ENCODE measurements at regions of chr14 and their contacts with region 1.

Region 1: DNA sequence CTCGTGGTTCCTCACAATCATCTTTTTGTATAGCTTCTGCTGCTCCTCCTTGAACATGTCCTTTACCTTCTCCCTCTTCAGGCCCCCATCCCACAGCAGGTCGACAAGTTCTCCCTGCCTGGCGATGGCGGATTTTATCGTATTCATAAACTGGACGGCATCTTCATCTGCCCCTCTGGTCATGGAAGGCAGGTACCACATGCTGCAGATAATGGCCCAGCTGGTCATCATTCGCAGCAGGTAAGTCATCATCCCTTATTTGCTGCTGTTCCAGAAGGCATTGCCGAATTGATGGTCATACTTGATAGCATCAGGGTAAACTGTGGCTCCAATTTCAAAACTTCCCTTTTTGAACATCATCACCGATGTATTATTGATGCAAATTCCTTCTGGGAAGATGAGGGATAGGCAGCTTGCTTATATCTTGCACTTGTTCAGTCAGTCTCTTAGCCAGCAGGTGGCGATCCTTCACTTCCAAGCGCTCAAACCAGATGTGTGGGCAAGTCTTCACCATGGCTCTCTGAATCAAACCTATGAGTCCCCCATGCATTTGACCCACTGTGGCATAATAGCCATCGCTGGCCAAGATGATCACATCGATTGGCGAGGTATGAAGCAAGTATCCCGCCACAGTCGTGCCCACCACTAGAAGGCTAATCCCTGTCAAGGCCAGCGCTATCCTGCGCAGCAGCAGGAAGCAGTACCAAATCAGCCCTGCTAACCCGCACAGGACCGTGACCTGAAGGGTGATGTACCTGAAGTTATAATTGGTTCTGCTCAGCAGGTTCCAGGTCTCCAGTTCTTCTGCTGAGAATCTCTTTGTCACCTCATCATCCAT is 381.5 kb upstream of the STXBP6 start:
- DNase-seq: peak; percentile 53
- ATAC-seq: peak; percentile 97
- H3K4me3 ChIP-seq: no peak overlapping the region
- H3K27ac ChIP-seq: no peak overlapping the region
- H3K4me1 ChIP-seq: no peaks in the 10 kb centered on the region
- H3K27me3 ChIP-seq: no peaks in the 10 kb centered on the region
- CTCF ChIP-seq: peak; percentile 75
- EP300 ChIP-seq: no peak
- POLR2A ChIP-seq: no peak
- RAD21 ChIP-seq: no peak

Region 2: GRCh38 chr14:24232121-24232644 is 1199.2 kb before region 1 on chr14 and contains the start of gene NEDD8:
- CTCF ChIA-PET with region 1: no interaction called
- POLR2A ChIA-PET with region 1: no interaction called
- in situ Hi-C with region 1: no loop called
- intact Hi-C with region 1: loop called (anchors 10 kb)
- DNase-seq: peak; percentile 99
- ATAC-seq: peak; percentile 85
- H3K4me3 ChIP-seq: peak within 1 kb of the TSS; percentile 83 to 91 (median 85)
- H3K27ac ChIP-seq: peak within 1 kb of the TSS; percentile 84
- H3K4me1 ChIP-seq: peaks cover 47% of the 10 kb centered on the region
- H3K27me3 ChIP-seq: peaks cover 0 to 4% of the 10 kb centered on the region in 2 experiments; a peak in 1 of 5 replicates
- CTCF ChIP-seq: no peak; the same call in none of the 2 replicates
- EP300 ChIP-seq: no peak; a peak in 1 of 4 replicates
- POLR2A ChIP-seq: peak in 1 of 2 experiments; percentile 63; a peak in 2 of 4 replicates
- RAD21 ChIP-seq: no peak; the same call in 1 of the 2 replicates
- total RNA-seq, gene NEDD8: 713 and 818 TPM in 2 replicates

Region 3: GRCh38 chr14:25477321-25478098 is 46.1 kb after region 1 on chr14:
- CTCF ChIA-PET with region 1: no interaction called
- POLR2A ChIA-PET with region 1: no interaction called
- in situ Hi-C with region 1: no loop called
- intact Hi-C with region 1: no loop called
- DNase-seq: no peak
- ATAC-seq: no peak
- H3K4me3 ChIP-seq: no peak overlapping the region
- H3K27ac ChIP-seq: no peak overlapping the region
- H3K4me1 ChIP-seq: no peaks in the 10 kb centered on the region
- H3K27me3 ChIP-seq: no peaks in the 10 kb centered on the region
- CTCF ChIP-seq: no peak
- EP300 ChIP-seq: no peak
- POLR2A ChIP-seq: no peak
- RAD21 ChIP-seq: no peak

Region 4: DNA sequence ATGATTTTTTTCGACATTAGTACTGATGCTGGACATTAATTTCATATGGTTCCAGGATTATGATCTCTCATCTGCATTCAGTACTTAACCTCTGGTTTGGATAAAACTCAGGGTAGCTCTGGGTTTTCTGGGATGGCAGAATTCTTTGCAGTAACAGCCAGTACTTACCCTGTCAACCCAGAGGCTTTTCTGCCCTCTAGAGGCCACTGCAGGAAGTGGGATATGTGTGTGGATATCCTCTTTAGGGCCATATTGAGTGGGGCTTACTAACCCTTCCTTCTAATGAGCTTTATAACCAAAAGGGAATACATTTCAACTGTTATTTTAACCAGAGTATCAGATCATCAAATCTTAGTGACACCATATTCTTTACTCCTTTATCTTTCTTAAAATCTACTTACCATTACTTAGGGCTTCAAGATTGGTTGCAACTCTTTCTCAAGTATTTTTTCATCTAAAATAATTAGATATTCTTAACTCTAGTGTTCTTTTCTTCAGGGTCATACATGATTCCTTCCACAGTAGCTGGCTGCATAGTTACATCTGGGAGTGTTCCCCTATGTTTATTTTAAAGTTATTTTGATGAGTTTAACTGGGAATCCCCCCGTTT is 106.5 kb after region 1 on chr14:
- CTCF ChIA-PET with region 1: interaction called, 3 read pairs
- POLR2A ChIA-PET with region 1: no interaction called
- in situ Hi-C with region 1: no loop called
- intact Hi-C with region 1: loop called (anchors 1 kb)
- DNase-seq: peak; percentile 52
- ATAC-seq: peak; percentile 92
- H3K4me3 ChIP-seq: no peak overlapping the region
- H3K27ac ChIP-seq: no peak overlapping the region
- H3K4me1 ChIP-seq: no peaks in the 10 kb centered on the region
- H3K27me3 ChIP-seq: no peaks in the 10 kb centered on the region
- CTCF ChIP-seq: peak; percentile 61
- EP300 ChIP-seq: no peak
- POLR2A ChIP-seq: no peak
- RAD21 ChIP-seq: no peak

Measured in HepG2 (cell line).